ENCODE measurements at regions of chr2 and their contacts with region 1.

Region 1: GRCh38 chr2:127927384-127927783 is 41.6 kb upstream of the AMMECR1L start:
- DNase-seq: no peak
- ATAC-seq: no peak
- H3K4me3 ChIP-seq: no peak overlapping the region
- H3K27ac ChIP-seq: no peak overlapping the region
- H3K4me1 ChIP-seq: 0 out of 2 replicates have a peak, but pooled peaks cover 2% of the 10 kb centered on the region
- H3K27me3 ChIP-seq: peaks cover 1% of the 10 kb centered on the region; the same call in 1 of the 2 replicates
- CTCF ChIP-seq: no peak
- POLR2A ChIP-seq: no peak
- RAD21 ChIP-seq: no peak

Region 2: DNA sequence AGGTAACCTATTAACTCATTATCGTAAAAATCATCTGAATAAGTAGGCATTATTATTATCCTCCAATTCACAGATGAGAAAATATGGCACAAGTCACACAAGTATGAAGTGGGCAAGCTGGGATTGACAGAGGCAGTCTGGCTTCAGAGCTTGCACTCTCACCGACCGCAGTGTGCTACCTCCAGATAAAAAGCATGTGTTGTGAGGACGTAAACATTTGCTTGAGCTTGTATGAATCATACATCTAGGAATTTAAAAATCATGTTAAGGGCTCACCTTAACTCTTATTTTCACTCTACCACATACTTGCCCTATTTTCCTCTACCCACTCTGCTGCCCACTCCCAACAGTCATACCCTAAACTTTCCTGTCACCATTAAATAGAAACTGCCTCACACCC is 23.6 kb after region 1 on chr2:
- CTCF ChIA-PET with region 1: no interaction called
- POLR2A ChIA-PET with region 1: interaction called, 10 read pairs
- dilution Hi-C with region 1: no loop called
- in situ Hi-C with region 1: no loop called
- intact Hi-C with region 1: no loop called
- DNase-seq: peak; percentile 36
- ATAC-seq: peak; percentile 19; the same call in 1 of the 2 replicates
- H3K4me3 ChIP-seq: no peak overlapping the region
- H3K27ac ChIP-seq: no peak overlapping the region
- H3K4me1 ChIP-seq: peaks cover 8% of the 10 kb centered on the region
- H3K27me3 ChIP-seq: no peaks in the 10 kb centered on the region
- CTCF ChIP-seq: no peak
- POLR2A ChIP-seq: no peak
- RAD21 ChIP-seq: no peak